WTC11 (cell line): ENCODE measurements at regions of chr1 and their contacts with region 1.

Region 1: DNA sequence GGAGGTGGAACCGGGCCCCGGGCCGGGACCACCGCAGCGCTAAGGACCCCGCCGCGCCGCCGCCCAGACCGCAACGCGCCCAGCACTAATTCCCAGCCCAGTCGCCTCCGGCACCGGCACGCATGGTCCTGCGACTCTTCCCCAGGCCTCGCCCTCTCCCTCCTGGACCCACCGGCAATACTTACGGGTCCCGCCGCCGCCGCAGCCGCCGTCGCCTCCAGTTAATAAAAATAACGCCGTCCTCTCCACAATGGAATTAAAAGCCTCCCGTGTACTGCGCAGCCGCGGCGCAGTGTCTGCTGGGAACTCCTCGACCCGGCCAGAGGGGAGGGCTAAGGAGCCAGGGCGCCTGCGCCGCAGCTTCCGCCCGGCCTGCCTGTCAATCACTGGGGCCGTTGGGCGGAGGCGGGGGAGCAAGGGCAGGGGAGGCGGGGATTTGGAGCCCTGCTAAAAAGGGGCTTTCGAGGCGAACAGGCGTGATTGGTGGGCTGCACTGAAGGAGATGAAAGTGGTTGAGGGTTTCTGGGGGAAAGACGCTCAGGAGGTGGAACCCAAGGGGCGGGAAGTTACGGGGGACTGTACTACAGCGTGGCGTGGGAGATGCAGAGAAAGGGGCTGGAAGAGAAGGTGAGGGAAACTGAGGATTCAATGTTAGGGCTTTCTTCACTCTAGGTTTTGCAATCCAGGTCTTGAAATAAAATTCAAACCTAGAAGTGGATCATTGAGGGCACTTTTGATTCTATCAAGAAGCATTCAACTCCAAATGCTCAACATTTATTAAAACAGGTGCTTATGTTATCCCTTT is at the start of gene ZNF281:
- DNase-seq: peak; percentile 99
- ATAC-seq: peak; percentile 87
- H3K4me3 Mint-ChIP-seq: peak within 1 kb of the TSS; percentile 97
- H3K27ac Mint-ChIP-seq: peak within 1 kb of the TSS; percentile 99
- H3K4me1 Mint-ChIP-seq: peaks cover 65% of the 10 kb centered on the region
- H3K27me3 Mint-ChIP-seq: no peaks in the 10 kb centered on the region
- CTCF ChIP-seq: no peak
- total RNA-seq, gene ZNF281: 47.7 to 49.6 TPM (median 49.3 TPM) in 3 replicates

Region 2: GRCh38 chr1:200364091-200364759 is 45.7 kb before region 1 on chr1:
- CTCF ChIA-PET with region 1: interaction called, 4 read pairs
- POLR2A ChIA-PET with region 1: interaction called, 14 read pairs
- DNase-seq: no peak
- ATAC-seq: peak; percentile 43
- H3K4me3 Mint-ChIP-seq: peak overlapping the region; percentile 37
- H3K27ac Mint-ChIP-seq: peak overlapping the region; percentile 98
- H3K4me1 Mint-ChIP-seq: peaks cover 50% of the 10 kb centered on the region
- H3K27me3 Mint-ChIP-seq: peaks cover 3% of the 10 kb centered on the region; the same call in 1 of the 2 replicates
- CTCF ChIP-seq: no peak

Region 3: DNA sequence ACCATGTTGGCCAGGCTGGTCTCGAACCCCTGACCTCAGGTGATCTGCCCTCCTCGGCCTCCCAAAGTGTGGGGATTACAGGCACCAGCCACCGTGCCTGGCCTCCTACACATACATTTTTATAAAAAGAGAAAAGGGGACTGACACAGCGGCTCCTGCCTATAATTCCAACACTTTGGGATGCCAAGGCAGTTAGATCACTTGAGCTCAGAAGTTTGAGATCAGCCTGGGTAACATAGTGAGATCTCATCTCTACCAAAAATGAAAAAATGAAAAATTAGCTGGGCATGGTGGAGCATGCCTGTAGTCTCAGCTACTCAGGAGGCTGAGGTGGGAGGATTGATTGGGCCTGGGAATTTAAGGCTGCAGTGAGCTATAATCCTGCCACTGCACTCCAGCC is 23.5 kb before region 1 on chr1:
- CTCF ChIA-PET with region 1: no interaction called
- POLR2A ChIA-PET with region 1: interaction called, 11 read pairs
- DNase-seq: no peak
- ATAC-seq: no peak
- H3K4me3 Mint-ChIP-seq: no peak overlapping the region
- H3K27ac Mint-ChIP-seq: no peak overlapping the region
- H3K4me1 Mint-ChIP-seq: peaks cover 12% of the 10 kb centered on the region; the same call in 1 of the 2 replicates
- H3K27me3 Mint-ChIP-seq: no peaks in the 10 kb centered on the region
- CTCF ChIP-seq: no peak